H1 (cell line): ENCODE measurements at regions of chr11 and their contacts with region 1.

Region 1: GRCh38 chr11:62591448-62592145 is at the start of gene TUT1:
- DNase-seq: peak; percentile 93 to 97
- H3K4me3 ChIP-seq: peak within 1 kb of the TSS; percentile 89 to 97 (median 94)
- H3K27ac ChIP-seq: peak within 1 kb of the TSS; percentile 72
- H3K4me1 ChIP-seq: peaks cover 0 to 3% (median under 1%) of the 10 kb centered on the region in 4 experiments; a peak in 5 of 7 replicates
- H3K27me3 ChIP-seq: no peaks in the 10 kb centered on the region
- CTCF ChIP-seq: no peak
- EP300 ChIP-seq: peak in 1 of 2 experiments; percentile 71; a peak in 1 of 3 replicates
- POLR2A ChIP-seq: peak; percentile 91 to 93
- RAD21 ChIP-seq: no peak; a peak in 1 of 4 replicates
- total RNA-seq, gene TUT1: 24.6 and 31.5 TPM in 2 replicates

Region 2: GRCh38 chr11:62556108-62556871 is 35.3 kb before region 1 on chr11:
- CTCF ChIA-PET with region 1: interaction called, 6 read pairs
- POLR2A ChIA-PET with region 1: interaction called, 19 read pairs
- DNase-seq: peak; percentile 63 to 77
- H3K4me3 ChIP-seq: no peak overlapping the region
- H3K27ac ChIP-seq: peak overlapping the region; percentile 67
- H3K4me1 ChIP-seq: peaks cover 32 to 68% (median 39%) of the 10 kb centered on the region in 4 experiments
- H3K27me3 ChIP-seq: no peaks in the 10 kb centered on the region
- CTCF ChIP-seq: no peak
- EP300 ChIP-seq: no peak
- POLR2A ChIP-seq: peak; percentile 20 to 36; a peak in 2 of 3 replicates
- RAD21 ChIP-seq: no peak

Region 3: GRCh38 chr11:62580959-62581715 is 10.5 kb before region 1 on chr11:
- CTCF ChIA-PET with region 1: interaction called, 15 read pairs
- POLR2A ChIA-PET with region 1: interaction called, 167 read pairs
- DNase-seq: no peak
- H3K4me3 ChIP-seq: no peak overlapping the region
- H3K27ac ChIP-seq: no peak overlapping the region
- H3K4me1 ChIP-seq: no peaks in the 10 kb centered on the region
- H3K27me3 ChIP-seq: no peaks in the 10 kb centered on the region
- CTCF ChIP-seq: no peak
- EP300 ChIP-seq: no peak
- POLR2A ChIP-seq: no peak
- RAD21 ChIP-seq: no peak

Region 4: DNA sequence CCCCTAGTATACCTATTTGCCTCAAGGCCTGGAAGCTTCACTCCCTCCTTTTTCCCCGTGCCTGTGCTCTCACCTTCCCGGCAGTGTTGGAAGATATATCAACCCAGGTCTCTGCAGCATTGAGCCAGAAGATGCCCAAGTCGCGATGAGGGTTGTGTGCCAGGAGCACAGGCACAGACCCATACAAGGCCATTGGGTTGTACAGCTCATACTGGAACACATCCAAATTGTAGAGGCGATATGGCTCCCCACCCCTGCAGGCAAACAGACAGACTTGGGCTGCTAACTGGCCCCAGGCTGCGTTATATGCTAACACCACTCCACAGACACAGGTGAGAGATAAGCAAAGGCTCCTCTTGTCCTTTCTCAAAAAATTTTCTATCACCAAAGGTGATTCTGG is 40.9 kb after region 1 on chr11:
- CTCF ChIA-PET with region 1: interaction called, 4 read pairs
- POLR2A ChIA-PET with region 1: interaction called, 10 read pairs
- DNase-seq: no peak
- H3K4me3 ChIP-seq: no peak overlapping the region
- H3K27ac ChIP-seq: no peak overlapping the region
- H3K4me1 ChIP-seq: no peaks in the 10 kb centered on the region
- H3K27me3 ChIP-seq: no peaks in the 10 kb centered on the region
- CTCF ChIP-seq: no peak
- EP300 ChIP-seq: no peak
- POLR2A ChIP-seq: no peak
- RAD21 ChIP-seq: no peak

Region 5: GRCh38 chr11:62665075-62665598 is 73.5 kb after region 1 on chr11 and contains the starts of genes C11orf98 and CSKMT:
- CTCF ChIA-PET with region 1: interaction called, 5 read pairs
- POLR2A ChIA-PET with region 1: interaction called, 77 read pairs
- DNase-seq: peak; percentile 79 to 99
- H3K4me3 ChIP-seq: peak within 1 kb of the TSS; percentile 83 to 98 (median 95)
- H3K27ac ChIP-seq: peak within 1 kb of the TSS; percentile 81
- H3K4me1 ChIP-seq: peaks cover 4 to 11% (median 8%) of the 10 kb centered on the region in 4 experiments
- H3K27me3 ChIP-seq: no peaks in the 10 kb centered on the region
- CTCF ChIP-seq: no peak; a peak in 1 of 4 replicates
- EP300 ChIP-seq: peak in 1 of 2 experiments; percentile 71; a peak in 1 of 3 replicates
- POLR2A ChIP-seq: peak; percentile 100
- RAD21 ChIP-seq: no peak; a peak in 1 of 4 replicates
- total RNA-seq, gene C11orf98: 171 and 173 TPM in 2 replicates
- total RNA-seq, gene CSKMT: 66.1 and 67.8 TPM in 2 replicates

Region 6: DNA sequence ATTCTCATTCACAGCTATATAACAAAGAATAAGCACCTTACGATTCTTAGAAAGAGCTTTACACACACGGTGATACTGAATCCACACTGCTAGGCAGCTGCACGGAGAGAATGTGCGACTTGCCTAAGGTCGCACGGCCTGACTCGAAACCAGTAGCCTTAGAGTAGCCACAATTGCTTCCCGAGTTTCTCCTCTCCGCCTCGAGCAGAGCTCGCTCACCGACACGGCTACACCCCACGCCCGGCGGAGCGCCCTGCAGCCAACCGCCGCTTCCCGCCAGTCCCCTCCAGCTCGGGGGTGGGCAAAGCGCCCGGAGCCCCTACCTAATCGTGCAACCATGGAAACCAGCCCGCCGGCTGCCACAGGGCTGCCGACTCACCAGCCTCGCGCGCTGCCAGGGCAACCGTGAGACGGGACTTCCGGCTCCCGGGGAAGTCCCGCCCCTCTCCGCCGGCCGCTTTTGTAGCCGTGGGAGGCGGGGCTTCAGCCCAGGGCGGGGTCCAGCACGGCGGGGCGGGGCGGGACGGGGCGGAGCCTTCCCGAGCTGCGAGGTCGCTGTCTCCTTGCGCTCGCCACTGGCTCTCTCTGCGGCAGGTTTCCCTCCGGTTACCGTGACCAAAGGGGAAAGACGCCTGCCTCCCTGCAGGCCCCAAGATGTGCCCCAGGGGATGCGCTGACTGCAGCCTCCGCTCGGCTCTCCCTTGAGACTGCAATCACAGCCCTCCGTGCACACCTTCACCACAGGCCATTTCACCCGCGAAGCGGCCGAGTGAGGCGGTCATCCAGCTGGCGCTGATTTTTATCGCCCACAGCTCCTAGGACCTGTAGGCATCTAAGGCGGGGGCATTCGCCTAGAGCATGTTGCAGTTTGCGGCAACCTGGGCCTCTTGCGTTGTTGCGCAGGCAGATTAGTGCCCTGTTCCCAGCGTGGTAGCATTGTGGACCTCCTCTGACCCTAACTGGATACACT is 114.6 kb after region 1 on chr11:
- CTCF ChIA-PET with region 1: interaction called, 3 read pairs
- POLR2A ChIA-PET with region 1: interaction called, 44 read pairs
- DNase-seq: peak; percentile 82 to 95
- H3K4me3 ChIP-seq: peak overlapping the region; percentile 64 to 83 (median 82)
- H3K27ac ChIP-seq: peak overlapping the region; percentile 65
- H3K4me1 ChIP-seq: peaks cover 7 to 34% (median 20%) of the 10 kb centered on the region in 4 experiments
- H3K27me3 ChIP-seq: no peaks in the 10 kb centered on the region
- CTCF ChIP-seq: no peak
- EP300 ChIP-seq: no peak
- POLR2A ChIP-seq: peak in 1 of 2 experiments; percentile 62; a peak in 2 of 3 replicates
- RAD21 ChIP-seq: no peak